Mammary epithelial cell (primary cell): ENCODE measurements at regions of chr9 and their contacts with region 1.

Region 1: GRCh38 chr9:128723866-128724743 is at the start of gene ZDHHC12:
- DNase-seq: peak; percentile 98
- H3K4me3 ChIP-seq: peak within 1 kb of the TSS; percentile 80 to 87 (median 87)
- H3K27ac ChIP-seq: peak within 1 kb of the TSS; percentile 53
- H3K4me1 ChIP-seq: peaks cover 13% of the 10 kb centered on the region
- H3K27me3 ChIP-seq: no peaks in the 10 kb centered on the region
- CTCF ChIP-seq: no peak
- total RNA-seq, gene ZDHHC12: 30.0 to 61.3 TPM

Region 2: GRCh38 chr9:128653941-128654340 is 70.2 kb before region 1 on chr9:
- CTCF ChIA-PET with region 1: no interaction called
- dilution Hi-C with region 1: no loop called
- in situ Hi-C with region 1: no loop called
- intact Hi-C with region 1: no loop called
- DNase-seq: no peak
- H3K4me3 ChIP-seq: no peak overlapping the region
- H3K27ac ChIP-seq: no peak overlapping the region
- H3K4me1 ChIP-seq: peaks cover 5% of the 10 kb centered on the region
- H3K27me3 ChIP-seq: no peaks in the 10 kb centered on the region
- CTCF ChIP-seq: no peak

Region 3: GRCh38 chr9:128845155-128845931 is 121.2 kb after region 1 on chr9:
- CTCF ChIA-PET with region 1: no interaction called
- dilution Hi-C with region 1: no loop called
- in situ Hi-C with region 1: no loop called
- intact Hi-C with region 1: no loop called
- DNase-seq: peak; percentile 75
- H3K4me3 ChIP-seq: peak overlapping the region in 1 of 3 experiments; percentile 21
- H3K27ac ChIP-seq: no peak overlapping the region
- H3K4me1 ChIP-seq: peaks cover 18% of the 10 kb centered on the region
- H3K27me3 ChIP-seq: no peaks in the 10 kb centered on the region
- CTCF ChIP-seq: peak; percentile 44 to 70

Region 4: DNA sequence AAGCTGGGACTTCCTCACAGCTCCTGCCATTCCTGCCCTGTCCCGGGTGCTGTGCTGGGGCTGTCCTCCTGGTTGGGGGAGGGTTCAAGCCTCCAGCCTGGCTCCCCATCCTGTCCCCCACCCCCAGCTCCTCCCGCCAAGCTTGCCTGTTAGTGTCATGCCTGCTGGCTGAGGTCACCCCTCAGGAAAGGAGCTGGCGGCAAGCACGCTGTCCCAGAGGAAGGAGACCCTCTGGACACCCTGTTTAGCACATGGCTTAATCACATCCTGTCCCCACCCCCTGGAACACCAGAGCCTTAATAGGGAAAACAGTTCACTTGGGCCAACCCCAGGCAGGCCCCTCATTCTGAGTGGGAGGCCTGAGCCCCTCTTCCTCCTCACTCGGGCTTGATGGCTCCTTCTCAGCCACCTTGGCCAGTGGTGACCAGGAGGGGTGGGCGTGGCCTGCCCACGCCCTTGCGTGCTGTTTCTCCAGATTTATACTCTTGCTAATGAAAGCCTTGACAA is 187.5 kb after region 1 on chr9:
- CTCF ChIA-PET with region 1: no interaction called
- dilution Hi-C with region 1: no loop called
- in situ Hi-C with region 1: no loop called
- intact Hi-C with region 1: loop called (anchors 10 kb)
- DNase-seq: no peak
- H3K4me3 ChIP-seq: no peak overlapping the region
- H3K27ac ChIP-seq: peak overlapping the region; percentile 91
- H3K4me1 ChIP-seq: peaks cover 63% of the 10 kb centered on the region
- H3K27me3 ChIP-seq: no peaks in the 10 kb centered on the region
- CTCF ChIP-seq: no peak